Mammary epithelial cell (primary cell): ENCODE measurements at regions of chr2 and their contacts with region 1.

Region 1: DNA sequence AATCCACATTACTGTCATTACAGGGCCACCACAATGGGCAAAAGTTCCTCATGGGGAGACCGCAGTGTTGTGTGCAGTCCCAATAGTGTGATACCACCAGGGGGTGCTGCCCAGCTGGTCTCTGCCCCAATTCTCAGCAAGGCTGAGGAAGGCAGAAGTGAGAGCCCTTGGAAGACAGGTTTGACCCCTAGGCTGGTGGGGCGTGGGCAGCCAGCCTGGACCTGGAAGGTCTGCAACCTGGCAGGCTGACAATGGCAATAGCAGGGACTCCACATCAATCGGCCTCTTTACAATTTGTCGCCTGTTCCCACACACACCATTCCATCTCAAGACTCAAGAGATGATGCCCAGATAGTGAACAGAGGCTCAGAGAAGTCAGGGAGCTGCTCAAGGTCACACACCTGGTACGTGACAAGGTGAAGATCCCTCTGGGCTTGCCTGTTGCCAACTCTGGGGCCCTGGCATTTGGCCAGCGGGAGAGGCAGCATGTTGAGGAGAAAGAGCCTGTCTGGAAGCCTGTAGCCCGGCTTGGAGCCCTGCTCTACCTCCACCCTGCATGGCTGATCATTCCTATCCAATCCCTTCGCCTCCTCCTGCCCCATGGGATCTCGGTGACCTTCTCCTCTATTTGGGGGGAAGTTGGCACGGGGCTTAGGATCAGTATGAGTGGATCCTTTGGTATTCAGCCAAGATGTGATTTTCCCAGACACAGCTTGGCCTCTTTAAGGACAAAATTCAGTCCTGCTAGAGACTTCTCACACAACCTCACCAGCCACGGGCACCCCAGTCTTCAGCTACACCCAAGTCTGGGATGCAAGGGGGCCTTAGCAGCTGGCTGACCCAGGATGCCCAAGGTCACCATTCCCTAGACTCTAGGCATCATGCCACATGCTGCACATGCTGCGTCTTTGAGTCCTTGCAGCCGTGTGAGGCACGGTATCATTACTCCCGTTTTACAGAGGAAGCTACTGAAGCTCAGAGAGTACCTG is 2.9 kb upstream of the ATOH8 start:
- DNase-seq: peak; percentile 28
- H3K4me3 ChIP-seq: no peak overlapping the region
- H3K27ac ChIP-seq: no peak overlapping the region
- H3K4me1 ChIP-seq: peaks cover 12% of the 10 kb centered on the region
- H3K27me3 ChIP-seq: peaks cover 40% of the 10 kb centered on the region
- CTCF ChIP-seq: peak; percentile 90 to 95

Region 2: GRCh38 chr2:85490861-85491755 is 259.8 kb before region 1 on chr2:
- CTCF ChIA-PET with region 1: no interaction called
- dilution Hi-C with region 1: no loop called
- in situ Hi-C with region 1: no loop called
- intact Hi-C with region 1: no loop called
- DNase-seq: no peak
- H3K4me3 ChIP-seq: no peak overlapping the region
- H3K27ac ChIP-seq: no peak overlapping the region
- H3K4me1 ChIP-seq: no peaks in the 10 kb centered on the region
- H3K27me3 ChIP-seq: no peaks in the 10 kb centered on the region
- CTCF ChIP-seq: no peak

Region 3: DNA sequence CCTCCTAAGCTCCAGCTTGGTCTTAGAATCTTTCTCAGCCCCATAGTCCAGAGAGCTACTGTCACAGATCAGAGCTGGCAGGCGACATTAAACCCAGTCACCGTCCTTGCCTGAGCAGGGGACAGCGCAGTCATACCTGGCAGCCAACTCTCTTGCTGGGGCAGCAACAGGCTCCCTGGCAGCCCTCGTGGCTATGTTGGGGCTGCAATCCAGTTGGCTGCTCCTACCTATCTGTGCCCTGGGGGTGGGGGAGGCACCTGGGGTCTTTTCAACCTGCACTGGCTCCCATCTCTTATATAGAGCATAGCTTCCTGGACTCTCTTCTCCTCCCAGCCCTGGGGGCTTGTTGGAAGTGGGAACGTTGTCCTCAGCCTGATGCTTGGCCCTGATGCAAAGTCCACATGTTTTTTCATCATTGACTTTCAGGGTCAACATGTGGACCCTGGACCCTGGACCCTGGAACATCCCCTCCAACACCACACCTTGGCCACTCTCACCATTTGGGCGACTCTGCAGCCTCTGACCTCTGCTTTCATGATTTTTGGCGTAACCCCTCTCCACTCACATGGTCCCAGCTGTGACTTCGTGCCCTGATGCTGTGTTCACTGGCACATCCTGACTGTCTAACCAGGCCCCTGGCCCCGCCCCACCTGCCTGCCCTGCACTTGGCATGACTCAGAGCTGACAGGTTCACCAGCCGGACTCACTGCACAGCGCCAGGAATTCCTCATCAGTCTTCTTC is 48.5 kb after region 1 on chr2:
- CTCF ChIA-PET with region 1: interaction called, 7 read pairs
- dilution Hi-C with region 1: no loop called
- in situ Hi-C with region 1: no loop called
- intact Hi-C with region 1: loop called (anchors 1 kb)
- DNase-seq: peak; percentile 65
- H3K4me3 ChIP-seq: no peak overlapping the region
- H3K27ac ChIP-seq: no peak overlapping the region
- H3K4me1 ChIP-seq: peaks cover 7% of the 10 kb centered on the region
- H3K27me3 ChIP-seq: no peaks in the 10 kb centered on the region
- CTCF ChIP-seq: no peak